Heart right ventricle (tissue), 16 donors: ENCODE measurements at regions of chr17 and their contacts with region 1.

Region 1: GRCh38 chr17:47905221-47905781 is 9.3 kb downstream of the SP2 start:
- DNase-seq: peak; percentile 66 to 88
- ATAC-seq: peak; percentile 76 to 92 (median 86)
- H3K4me3 ChIP-seq: peak overlapping the region in 5 of 10 donors; percentile 2 to 22 (median 14)
- H3K27ac ChIP-seq: peak overlapping the region; percentile 89 to 100 (median 93)
- H3K4me1 ChIP-seq: peaks cover 45 to 97% (median 80%) of the 10 kb centered on the region in 9 donors
- H3K27me3 ChIP-seq: no peaks in the 10 kb centered on the region
- CTCF ChIP-seq: peak in 2 of 9 donors; percentile 10 to 22

Region 2: DNA sequence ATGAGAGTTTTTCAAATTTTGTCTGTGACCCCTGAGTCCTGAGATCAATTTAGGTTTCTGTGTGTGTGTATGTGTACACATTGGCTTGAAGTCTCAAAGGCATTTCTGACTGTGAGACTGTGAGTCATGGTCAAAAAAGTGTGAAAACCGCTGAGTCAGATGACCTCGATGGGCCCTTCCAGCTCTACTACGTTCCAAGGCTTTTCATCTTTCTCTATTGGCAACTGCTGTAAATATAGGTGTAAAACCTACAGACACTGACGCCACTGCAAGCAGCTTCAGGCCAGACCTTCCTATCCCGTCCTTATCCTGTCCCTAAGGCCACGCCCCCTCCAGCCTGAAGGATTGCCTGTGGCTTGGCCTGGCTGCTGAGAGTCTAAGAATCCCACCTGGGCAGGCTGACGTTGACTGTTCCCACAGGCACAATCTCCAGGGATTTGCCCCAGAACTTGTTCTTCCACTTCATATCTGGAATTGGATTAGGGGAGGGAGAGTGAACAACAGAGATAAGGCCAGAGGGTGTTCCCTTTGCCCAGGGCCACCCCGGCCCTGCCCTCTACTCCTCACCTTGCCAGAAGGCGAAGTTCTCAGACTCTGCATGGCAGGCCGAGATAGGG is 95.0 kb before region 1 on chr17:
- intact Hi-C with region 1: no loop called
- DNase-seq: no peak
- ATAC-seq: no peak
- H3K4me3 ChIP-seq: no peak overlapping the region
- H3K27ac ChIP-seq: no peak overlapping the region
- H3K4me1 ChIP-seq: peaks cover 0 to 11% (median 0%) of the 10 kb centered on the region in 9 donors
- H3K27me3 ChIP-seq: no peaks in the 10 kb centered on the region
- CTCF ChIP-seq: no peak

Region 3: DNA sequence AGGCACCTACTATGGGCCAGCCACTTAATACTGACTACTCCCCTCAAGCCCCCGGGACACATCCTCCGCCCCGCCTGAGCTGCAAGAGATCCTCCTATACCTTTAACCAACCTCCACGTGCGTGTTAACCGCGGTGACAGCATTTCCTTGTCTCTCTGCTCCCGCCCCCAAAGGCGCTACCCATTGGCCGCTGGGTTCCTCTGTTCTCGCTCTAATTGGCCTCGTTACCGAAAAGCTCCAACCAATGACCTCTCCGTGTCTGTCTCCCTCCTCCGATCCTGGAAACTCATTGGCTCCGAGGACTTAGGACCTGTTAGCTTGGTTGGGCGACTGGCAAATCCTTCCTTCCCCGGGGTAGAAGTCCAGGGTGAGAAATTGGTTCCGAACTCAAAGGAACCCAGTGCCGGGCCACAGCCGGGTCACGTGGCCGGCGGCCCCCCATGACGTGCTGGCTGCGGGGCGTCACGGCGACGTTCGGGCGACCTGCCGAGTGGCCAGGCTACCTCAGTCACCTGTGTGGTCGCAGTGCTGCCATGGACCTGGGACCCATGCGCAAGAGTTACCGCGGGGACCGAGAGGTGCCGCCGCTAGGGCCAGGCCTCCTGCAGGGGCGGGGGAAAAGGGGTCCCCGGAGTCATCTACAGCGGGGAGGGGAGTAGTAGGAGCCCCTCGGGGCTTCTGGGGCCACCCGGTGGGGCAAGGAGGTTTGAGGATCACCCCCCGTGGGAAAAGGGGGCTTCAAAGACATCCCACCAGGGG is 36.1 kb after region 1 on chr17 and contains the start of gene PNPO:
- intact Hi-C with region 1: loop called in 5 of 10 experiments (anchors 5 kb)
- DNase-seq: peak; percentile 87 to 96
- ATAC-seq: peak; percentile 96 to 99 (median 98)
- H3K4me3 ChIP-seq: peak within 1 kb of the TSS; percentile 63 to 99 (median 86)
- H3K27ac ChIP-seq: peak within 1 kb of the TSS in 9 of 10 donors; percentile 78 to 90 (median 84)
- H3K4me1 ChIP-seq: peaks cover 0 to 43% (median 30%) of the 10 kb centered on the region in 9 donors
- H3K27me3 ChIP-seq: no peaks in the 10 kb centered on the region
- CTCF ChIP-seq: peak in 2 of 9 donors; percentile 10 to 14
- total RNA-seq, gene PNPO: 22.8 to 37.0 (median 31.5) TPM

Region 4: DNA sequence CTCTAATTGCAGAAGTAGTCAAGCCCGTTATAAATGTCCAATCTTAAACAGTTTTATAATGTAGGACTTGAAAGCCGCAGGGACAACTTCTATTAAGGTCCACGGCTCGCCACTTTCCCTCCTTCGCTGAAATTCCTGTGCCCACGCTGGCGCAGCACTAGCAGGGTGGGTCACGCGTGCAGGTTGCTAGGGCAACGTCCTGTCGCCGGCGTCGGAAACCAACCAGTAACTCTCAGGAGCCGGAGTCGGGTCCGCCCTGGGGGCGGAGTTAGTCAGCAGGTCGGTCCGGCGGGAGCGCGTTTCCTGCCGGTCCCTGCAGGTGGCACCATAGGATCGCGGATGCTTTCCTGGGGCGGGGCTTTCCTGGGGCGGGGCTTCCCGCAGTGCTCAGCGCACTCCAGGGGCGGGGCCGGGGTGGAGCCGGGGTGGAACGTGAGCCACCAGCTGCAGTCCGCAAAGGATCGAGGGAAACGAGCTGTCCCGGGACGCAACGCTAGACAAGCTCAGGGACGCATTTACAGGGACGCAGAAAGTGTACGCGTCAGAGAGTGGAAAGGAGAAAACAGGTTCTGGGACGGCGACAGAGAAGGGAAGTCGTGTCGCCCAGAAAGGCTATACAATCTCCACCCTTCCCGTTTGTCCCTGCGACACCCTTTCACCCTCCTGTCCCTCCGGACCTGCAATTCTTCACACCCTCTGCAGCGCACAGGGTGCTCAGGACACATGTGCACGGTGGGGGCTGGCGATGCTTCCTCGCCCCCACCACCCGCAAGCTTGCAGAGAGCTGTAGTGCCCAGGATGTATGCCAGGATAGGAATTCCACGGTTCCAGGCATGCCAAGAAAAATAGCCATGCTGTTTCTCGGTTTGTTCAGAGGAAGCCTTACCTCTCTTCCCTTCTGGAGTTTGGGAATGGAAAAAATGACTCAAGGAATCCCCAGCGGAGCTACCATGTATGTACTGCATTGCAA is 119.9 kb after region 1 on chr17:
- intact Hi-C with region 1: no loop called
- DNase-seq: peak; percentile 96 to 98
- ATAC-seq: peak; percentile 87 to 95 (median 92)
- H3K4me3 ChIP-seq: peak overlapping the region; percentile 27 to 60 (median 54)
- H3K27ac ChIP-seq: peak overlapping the region; percentile 32 to 89 (median 82)
- H3K4me1 ChIP-seq: peaks cover 18 to 51% (median 41%) of the 10 kb centered on the region in 9 donors
- H3K27me3 ChIP-seq: peaks cover 0 to 28% (median 16%) of the 10 kb centered on the region in 7 donors
- CTCF ChIP-seq: peak; percentile 53 to 88 (median 80)